Right ventricle myocardium inferior (tissue), 1 donor: ENCODE measurements at regions of chr12 and their contacts with region 1.

Region 1: DNA sequence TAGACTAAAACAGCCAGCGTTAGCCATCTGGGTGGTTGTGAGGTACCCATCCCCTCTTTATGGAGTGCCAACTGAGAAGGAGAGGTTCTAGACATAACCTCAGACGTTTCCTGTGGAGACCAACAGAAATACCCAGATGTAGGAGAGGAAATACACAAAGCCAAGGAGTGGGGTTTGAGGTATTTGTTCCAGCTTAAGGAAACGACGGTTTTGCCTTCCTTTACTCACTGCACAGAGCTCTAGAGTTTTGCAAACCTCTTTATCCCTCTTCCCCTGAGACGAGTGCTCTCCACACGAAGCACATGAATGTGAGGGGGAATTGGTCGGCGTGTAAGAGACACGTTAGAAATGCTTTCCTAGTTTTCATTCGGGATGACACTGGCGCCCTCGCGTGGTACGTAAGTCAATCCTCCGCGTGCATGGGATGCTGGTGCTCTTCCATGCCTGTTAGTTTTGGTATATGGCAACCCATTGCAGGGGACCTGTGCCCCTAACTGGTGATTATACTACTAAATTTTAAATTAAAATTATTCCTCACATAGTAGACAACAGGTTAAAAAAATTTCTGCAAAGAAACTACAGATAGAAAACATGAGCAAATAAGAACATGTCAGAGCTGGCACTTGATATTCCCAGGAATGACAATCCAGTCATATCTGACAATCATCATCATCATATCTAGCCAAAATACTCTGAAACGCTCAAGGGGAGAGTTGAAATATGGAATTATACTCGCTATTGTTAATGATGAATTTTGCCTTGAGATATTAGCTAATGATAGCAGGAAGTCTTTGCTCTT is 121.7 kb downstream of the PPM1H start:
- DNase-seq: peak; percentile 84
- ATAC-seq: peak; percentile 76

Region 2: DNA sequence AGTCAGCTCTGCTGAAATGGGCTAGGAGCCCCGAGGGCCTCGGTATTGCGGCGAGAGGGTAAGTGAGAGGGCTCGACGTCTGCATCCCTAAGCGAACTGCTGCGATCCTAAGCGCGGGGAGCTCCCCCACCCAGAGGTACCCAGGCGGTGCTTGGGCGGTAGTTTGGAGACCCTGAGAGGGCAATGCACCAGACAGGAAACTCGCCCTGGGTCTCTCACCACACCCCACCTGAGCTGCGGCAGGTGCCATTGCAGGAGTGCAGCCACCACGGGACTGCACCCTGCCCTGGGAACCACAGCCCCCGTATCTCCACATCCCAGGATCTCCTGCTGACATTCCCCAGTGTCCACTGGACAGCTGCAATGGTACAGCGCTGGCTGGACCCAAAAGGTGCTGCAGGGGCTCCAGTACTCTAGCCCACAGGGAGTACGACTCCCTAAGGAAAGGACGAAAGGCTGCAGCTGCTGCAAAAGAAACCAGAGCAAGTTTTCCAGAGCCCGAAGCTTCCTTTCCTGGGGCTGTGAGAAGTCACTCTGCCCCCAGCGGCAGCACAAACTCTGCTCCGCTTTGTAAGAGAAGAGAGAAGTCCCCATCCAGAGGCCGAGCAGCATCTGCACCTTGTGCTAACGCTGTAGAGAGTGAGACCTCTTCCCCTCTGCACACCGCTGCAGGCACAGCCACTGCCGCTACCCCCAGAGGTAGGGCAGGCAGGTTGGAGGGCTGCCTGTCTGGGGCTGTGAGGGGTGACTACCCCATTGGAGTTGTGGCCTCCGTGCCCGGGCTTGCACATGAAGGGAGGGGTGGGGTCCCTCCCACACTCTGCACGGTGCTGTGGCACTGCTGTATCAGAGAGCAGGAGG is 377.7 kb before region 1 on chr12:
- intact Hi-C with region 1: loop called (anchors 5 kb)
- DNase-seq: peak; percentile 57
- ATAC-seq: peak; percentile 76

Region 3: GRCh38 chr12:62692884-62693283 is 120.3 kb before region 1 on chr12:
- intact Hi-C with region 1: no loop called
- DNase-seq: no peak
- ATAC-seq: peak; percentile 9

Region 4: GRCh38 chr12:62793256-62794217 is 19.7 kb before region 1 on chr12:
- intact Hi-C with region 1: no loop called
- DNase-seq: peak; percentile 93
- ATAC-seq: peak; percentile 79

Region 5: DNA sequence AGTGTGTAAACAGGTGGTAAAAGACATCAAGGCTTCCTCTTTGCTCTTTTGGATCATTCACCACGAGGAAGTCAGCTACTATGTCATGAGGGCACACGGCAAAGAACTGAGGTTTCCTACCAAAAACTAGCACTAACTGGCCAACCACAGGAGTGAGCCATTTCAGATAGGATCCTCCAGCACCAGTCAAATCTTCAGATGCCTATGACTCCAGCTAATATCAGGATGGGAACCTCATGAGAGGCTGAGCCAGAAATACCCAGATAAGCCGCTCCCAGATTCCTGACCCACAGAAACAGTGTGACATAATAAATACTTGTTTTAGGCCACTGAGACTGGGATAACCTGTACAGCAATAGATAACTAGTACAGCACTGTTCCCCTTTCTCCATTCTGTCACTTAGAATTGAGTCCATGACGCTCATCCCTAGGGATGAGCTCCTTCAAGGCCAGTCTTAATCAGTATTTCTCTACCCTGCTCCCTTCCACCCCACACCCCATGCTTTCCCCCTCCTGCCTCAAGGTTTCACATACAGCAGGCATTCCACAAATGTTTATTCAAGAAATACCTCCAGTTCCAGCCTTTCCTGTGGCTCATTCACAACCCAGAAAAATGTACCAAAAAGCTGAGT is 53.3 kb after region 1 on chr12:
- intact Hi-C with region 1: loop called (anchors 5 kb)
- DNase-seq: no peak
- ATAC-seq: peak; percentile 23

Region 6: GRCh38 chr12:62934799-62935674 is 121.8 kb after region 1 on chr12 and contains the start of gene PPM1H:
- intact Hi-C with region 1: loop called (anchors 5 kb)
- DNase-seq: peak; percentile 86
- ATAC-seq: peak; percentile 89
- total RNA-seq, gene PPM1H: 8.3 TPM

Region 7: DNA sequence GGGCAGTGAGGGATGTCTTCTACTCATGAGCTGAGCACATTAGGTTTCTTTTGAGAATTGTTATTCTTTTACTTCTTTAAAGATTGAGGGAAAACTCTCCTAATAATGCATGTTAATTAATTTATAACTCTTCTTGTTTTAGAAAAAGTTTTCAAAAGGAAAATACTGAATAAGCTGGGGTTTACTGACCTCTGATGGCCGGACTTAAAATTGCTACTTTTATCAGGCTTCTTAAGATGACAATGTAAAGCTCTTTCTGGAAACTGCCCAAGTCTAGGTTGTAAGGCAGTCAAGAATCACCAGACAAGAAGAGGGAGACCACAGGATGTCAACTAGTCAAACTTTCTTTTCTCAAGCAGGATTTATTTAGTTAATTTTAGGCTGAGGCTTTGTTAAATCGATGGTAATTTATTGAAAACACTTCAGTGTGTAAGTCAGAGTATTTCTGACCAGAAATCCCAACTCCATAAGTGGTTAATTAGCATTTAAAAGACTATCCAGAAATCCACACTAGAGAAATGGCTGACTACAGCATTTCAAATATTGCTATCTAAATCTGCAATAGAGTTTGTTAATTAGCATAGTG is 255.7 kb after region 1 on chr12:
- intact Hi-C with region 1: loop called (anchors 5 kb)
- DNase-seq: no peak
- ATAC-seq: no peak

Region 8: DNA sequence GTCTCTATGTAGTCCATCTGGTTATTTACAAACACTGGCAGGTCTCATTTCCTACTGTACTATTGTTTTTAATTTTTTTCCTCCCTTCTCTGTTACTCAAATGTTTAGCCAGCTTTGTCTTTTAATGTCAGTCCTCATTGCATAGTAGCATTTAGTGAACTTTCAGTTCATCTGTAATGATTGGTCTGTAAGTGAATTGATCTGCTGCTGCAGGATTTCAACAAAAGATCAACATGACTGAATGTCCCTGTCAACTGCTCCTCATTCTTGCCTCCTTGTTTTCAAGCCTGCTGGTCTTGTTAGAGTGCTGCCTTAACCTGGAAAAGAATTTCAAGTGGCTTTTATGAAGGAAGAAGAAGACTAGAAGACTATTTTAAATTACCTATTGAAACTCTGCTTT is 357.1 kb after region 1 on chr12:
- intact Hi-C with region 1: no loop called
- DNase-seq: no peak
- ATAC-seq: no peak